PC-9 (cell line): ENCODE measurements at regions of chr13 and their contacts with region 1.

Region 1: DNA sequence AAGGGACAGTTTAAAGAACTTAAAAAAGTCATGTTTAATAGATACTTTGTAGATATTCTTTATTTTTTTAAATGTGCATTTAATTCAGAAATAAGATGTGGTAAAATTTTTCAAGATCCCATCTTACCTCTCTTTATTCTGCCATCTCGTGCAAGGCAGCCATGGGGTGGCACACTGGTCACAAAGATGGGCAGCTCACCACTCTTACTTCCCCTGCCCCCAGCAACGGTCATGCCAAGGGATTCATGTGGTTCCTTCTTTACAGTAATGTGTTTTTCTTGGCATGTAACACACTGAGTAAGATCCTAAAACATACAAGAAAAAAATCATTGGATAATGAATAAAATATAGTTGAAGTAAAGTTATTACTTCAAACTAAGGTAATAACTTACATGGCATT is 64.2 kb downstream of the LNX2 start:
- DNase-seq: no peak
- H3K4me3 ChIP-seq: no peak overlapping the region
- H3K27ac ChIP-seq: no peak overlapping the region
- H3K4me1 ChIP-seq: no peaks in the 10 kb centered on the region
- H3K27me3 ChIP-seq: no peaks in the 10 kb centered on the region
- CTCF ChIP-seq: no peak

Region 2: GRCh38 chr13:26847281-26847680 is 708.8 kb before region 1 on chr13:
- CTCF ChIA-PET with region 1: no interaction called
- POLR2A ChIA-PET with region 1: no interaction called
- intact Hi-C with region 1: no loop called
- DNase-seq: no peak
- H3K4me3 ChIP-seq: no peak overlapping the region
- H3K27ac ChIP-seq: no peak overlapping the region
- H3K4me1 ChIP-seq: no peaks in the 10 kb centered on the region
- H3K27me3 ChIP-seq: peaks cover 72% of the 10 kb centered on the region
- CTCF ChIP-seq: no peak

Region 3: DNA sequence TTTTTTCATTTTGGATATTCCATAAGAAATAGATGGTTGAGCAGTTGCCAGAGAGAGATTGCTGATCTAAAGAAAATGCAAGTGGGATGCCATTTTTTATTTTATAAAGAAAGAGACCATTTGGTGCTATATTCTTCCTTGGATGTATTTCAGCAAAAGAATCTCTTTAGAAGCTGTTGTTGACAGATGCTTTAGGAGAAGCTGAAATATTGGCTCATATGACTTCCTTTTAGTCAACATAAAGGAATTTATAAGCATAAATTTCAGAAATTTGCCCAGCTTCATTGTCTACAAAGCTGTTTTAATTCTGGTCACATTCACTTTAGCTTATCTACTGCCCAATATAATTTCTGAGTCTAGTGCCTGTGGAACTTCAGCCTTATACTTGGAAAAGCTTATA is 102.4 kb after region 1 on chr13:
- CTCF ChIA-PET with region 1: no interaction called
- POLR2A ChIA-PET with region 1: no interaction called
- intact Hi-C with region 1: loop called (anchors 10 kb)
- DNase-seq: peak in 1 of 2 experiments; percentile 44
- H3K4me3 ChIP-seq: 0 out of 2 replicates have a peak overlapping the region, but pooled peaks have one; percentile 11
- H3K27ac ChIP-seq: peak overlapping the region; percentile 50
- H3K4me1 ChIP-seq: peaks cover 33% of the 10 kb centered on the region
- H3K27me3 ChIP-seq: no peaks in the 10 kb centered on the region
- CTCF ChIP-seq: no peak